ENCODE measurements at regions of chr2 and their contacts with region 1.

Region 1: GRCh38 chr2:144320491-144320890 is 199.4 kb downstream of the ZEB2 start:
- DNase-seq: peak in 5 of 9 donors; percentile 16 to 22 (median 18)
- ATAC-seq: peak; percentile 84
- H3K4me3 ChIP-seq: no peak overlapping the region
- H3K4me3 Mint-ChIP-seq: peak overlapping the region in 4 of 10 donors; percentile 5 to 29 (median 18)
- H3K27ac ChIP-seq: no peak overlapping the region
- H3K27ac Mint-ChIP-seq: peak overlapping the region in 4 of 9 donors; percentile 4 to 66 (median 31)
- H3K4me1 ChIP-seq: peaks cover 0 to 32% of the 10 kb centered on the region in 2 donors
- H3K4me1 Mint-ChIP-seq: peaks cover 9 to 42% (median 16%) of the 10 kb centered on the region in 7 donors
- H3K27me3 ChIP-seq: no peaks in the 10 kb centered on the region
- H3K27me3 Mint-ChIP-seq: no peaks in the 10 kb centered on the region

Region 2: DNA sequence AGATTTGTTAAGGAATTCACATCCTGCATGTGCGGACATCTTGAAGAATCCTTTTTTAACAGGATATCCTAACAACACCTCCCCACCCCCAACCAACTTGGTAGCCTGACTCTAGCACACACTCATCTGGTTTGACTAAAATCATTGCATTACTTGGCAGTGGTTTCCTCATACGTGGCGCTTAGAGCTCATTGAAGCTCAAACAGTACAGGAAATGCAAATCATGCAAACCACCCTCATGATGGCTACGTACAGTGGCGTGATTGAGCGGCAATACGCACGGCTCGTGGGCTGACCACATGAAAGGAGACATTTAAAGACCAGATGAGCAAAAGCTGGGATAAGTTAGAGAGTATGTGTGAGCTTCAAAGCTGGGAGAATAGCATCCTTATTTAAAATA is 136.8 kb before region 1 on chr2:
- CTCF ChIA-PET with region 1: no interaction called
- POLR2A ChIA-PET with region 1: no interaction called
- intact Hi-C with region 1: loop called in 1 of 2 experiments (anchors 2 kb)
- DNase-seq: peak; percentile 12 to 78 (median 71)
- ATAC-seq: peak; percentile 98
- H3K4me3 ChIP-seq: no peak overlapping the region
- H3K4me3 Mint-ChIP-seq: peak overlapping the region; percentile 37 to 87 (median 79)
- H3K27ac ChIP-seq: no peak overlapping the region
- H3K27ac Mint-ChIP-seq: peak overlapping the region in 8 of 9 donors; percentile 8 to 89 (median 60)
- H3K4me1 ChIP-seq: peaks cover 9 to 30% of the 10 kb centered on the region in 2 donors
- H3K4me1 Mint-ChIP-seq: peaks cover 9 to 26% (median 13%) of the 10 kb centered on the region in 7 donors
- H3K27me3 ChIP-seq: no peaks in the 10 kb centered on the region
- H3K27me3 Mint-ChIP-seq: no peaks in the 10 kb centered on the region

Region 3: GRCh38 chr2:144332356-144333142 is 12.1 kb after region 1 on chr2:
- CTCF ChIA-PET with region 1: no interaction called
- POLR2A ChIA-PET with region 1: interaction called, 3 read pairs
- intact Hi-C with region 1: loop called in 1 of 2 experiments (anchors 1 kb)
- DNase-seq: peak; percentile 65 to 97 (median 85)
- ATAC-seq: peak; percentile 95
- H3K4me3 ChIP-seq: peak overlapping the region; percentile 75
- H3K4me3 Mint-ChIP-seq: peak overlapping the region; percentile 91 to 96 (median 93)
- H3K27ac ChIP-seq: peak overlapping the region; percentile 64
- H3K27ac Mint-ChIP-seq: peak overlapping the region; percentile 54 to 91 (median 87)
- H3K4me1 ChIP-seq: peaks cover 5 to 26% of the 10 kb centered on the region in 2 donors
- H3K4me1 Mint-ChIP-seq: peaks cover 7 to 31% (median 13%) of the 10 kb centered on the region in 7 donors
- H3K27me3 ChIP-seq: no peaks in the 10 kb centered on the region
- H3K27me3 Mint-ChIP-seq: peaks cover 0 to 6% (median 0%) of the 10 kb centered on the region in 5 donors

Region 4: DNA sequence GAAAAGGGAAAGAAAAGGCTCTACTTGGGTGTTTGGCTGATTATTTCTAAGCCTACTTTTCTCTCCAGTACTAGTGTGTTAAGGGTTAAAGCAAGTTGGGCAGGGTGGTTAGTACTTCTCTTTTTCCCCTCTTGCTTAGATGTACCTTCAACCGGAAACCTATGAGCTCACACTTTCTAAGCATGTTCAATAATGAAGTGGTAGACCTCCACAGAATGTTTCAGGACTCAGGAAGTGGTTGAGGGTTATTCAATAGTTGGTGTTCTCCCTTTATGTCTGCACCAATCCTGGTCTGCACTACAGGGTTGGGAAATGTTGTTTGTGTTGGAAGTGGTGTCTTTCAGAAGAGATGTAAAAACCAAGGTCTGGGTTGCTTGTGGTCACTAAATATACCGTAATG is 62.4 kb after region 1 on chr2:
- CTCF ChIA-PET with region 1: no interaction called
- POLR2A ChIA-PET with region 1: no interaction called
- intact Hi-C with region 1: loop called in 1 of 2 experiments (anchors 2 kb)
- DNase-seq: peak in 7 of 9 donors; percentile 31 to 68 (median 53)
- ATAC-seq: peak; percentile 90
- H3K4me3 ChIP-seq: no peak overlapping the region
- H3K4me3 Mint-ChIP-seq: peak overlapping the region in 8 of 10 donors; percentile 10 to 68 (median 46)
- H3K27ac ChIP-seq: no peak overlapping the region
- H3K27ac Mint-ChIP-seq: peak overlapping the region in 3 of 9 donors; percentile 15 to 54 (median 43)
- H3K4me1 ChIP-seq: peaks cover 8 to 24% of the 10 kb centered on the region in 2 donors
- H3K4me1 Mint-ChIP-seq: peaks cover 11 to 43% (median 25%) of the 10 kb centered on the region in 7 donors
- H3K27me3 ChIP-seq: no peaks in the 10 kb centered on the region
- H3K27me3 Mint-ChIP-seq: peaks cover 6 to 20% (median 13%) of the 10 kb centered on the region in 5 donors

Region 5: DNA sequence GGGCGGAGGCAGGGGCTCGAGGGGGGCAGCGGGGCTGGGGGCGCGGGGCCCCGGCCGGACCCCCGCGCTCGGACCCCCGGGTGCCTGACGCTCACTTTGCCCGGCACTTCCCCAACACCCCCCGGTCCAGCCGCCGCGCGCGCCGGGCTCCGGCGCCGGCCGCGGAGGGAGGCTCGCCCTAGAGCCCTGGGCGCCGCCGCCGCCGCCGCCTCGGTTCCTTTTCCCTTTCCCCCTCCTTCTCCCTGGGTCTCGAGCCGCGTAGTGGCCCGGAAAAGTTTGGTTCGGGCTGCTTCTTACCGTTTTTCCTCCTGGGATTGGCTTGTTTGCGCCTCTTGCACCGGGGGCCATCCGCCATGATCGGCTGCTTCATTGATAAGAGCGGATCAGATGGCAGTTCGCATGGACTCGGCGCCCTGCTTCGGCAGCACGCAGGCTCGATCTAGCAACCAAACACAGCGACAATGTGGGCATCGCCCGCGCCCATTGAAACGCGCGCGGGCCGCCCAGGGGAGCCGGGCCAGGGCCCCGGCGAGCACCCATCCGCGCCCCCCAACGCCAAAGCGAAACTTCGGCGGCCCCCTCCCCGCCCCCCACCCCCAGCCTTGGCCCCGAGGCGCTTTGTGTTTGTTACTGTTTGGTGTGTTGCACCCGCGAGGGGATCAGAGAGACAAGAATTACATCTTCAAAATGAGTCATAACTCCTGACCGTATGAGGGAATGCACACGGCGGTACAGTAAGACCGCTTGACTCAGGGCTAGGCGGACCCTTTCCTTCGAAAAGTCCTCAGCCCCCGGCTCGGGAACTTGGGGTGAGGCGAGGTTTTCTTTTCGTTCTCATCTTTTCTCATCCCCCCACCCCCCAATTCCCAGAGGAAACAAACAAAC is 196.7 kb after region 1 on chr2:
- CTCF ChIA-PET with region 1: no interaction called
- POLR2A ChIA-PET with region 1: no interaction called
- intact Hi-C with region 1: loop called in 1 of 2 experiments (anchors 1 kb)
- DNase-seq: peak in 6 of 9 donors; percentile 14 to 62 (median 32)
- ATAC-seq: peak; percentile 62
- H3K4me3 ChIP-seq: peak overlapping the region; percentile 49
- H3K4me3 Mint-ChIP-seq: no peak overlapping the region
- H3K27ac ChIP-seq: peak overlapping the region; percentile 37
- H3K27ac Mint-ChIP-seq: peak overlapping the region in 3 of 9 donors; percentile 46 to 85 (median 52)
- H3K4me1 ChIP-seq: peaks cover 21 to 22% of the 10 kb centered on the region in 2 donors
- H3K4me1 Mint-ChIP-seq: peaks cover 5 to 22% (median 18%) of the 10 kb centered on the region in 7 donors
- H3K27me3 ChIP-seq: peaks cover 0 to 33% of the 10 kb centered on the region in 2 donors
- H3K27me3 Mint-ChIP-seq: peaks cover 38 to 60% (median 52%) of the 10 kb centered on the region in 5 donors

Region 6: GRCh38 chr2:144671695-144672455 is 351.4 kb after region 1 on chr2:
- CTCF ChIA-PET with region 1: no interaction called
- POLR2A ChIA-PET with region 1: no interaction called
- intact Hi-C with region 1: no loop called
- DNase-seq: no peak
- ATAC-seq: peak; percentile 82
- H3K4me3 ChIP-seq: no peak overlapping the region
- H3K4me3 Mint-ChIP-seq: no peak overlapping the region
- H3K27ac ChIP-seq: no peak overlapping the region
- H3K27ac Mint-ChIP-seq: no peak overlapping the region
- H3K4me1 ChIP-seq: no peaks in the 10 kb centered on the region
- H3K4me1 Mint-ChIP-seq: no peaks in the 10 kb centered on the region
- H3K27me3 ChIP-seq: no peaks in the 10 kb centered on the region
- H3K27me3 Mint-ChIP-seq: peaks cover 0 to 6% (median 3%) of the 10 kb centered on the region in 5 donors

Region 7: DNA sequence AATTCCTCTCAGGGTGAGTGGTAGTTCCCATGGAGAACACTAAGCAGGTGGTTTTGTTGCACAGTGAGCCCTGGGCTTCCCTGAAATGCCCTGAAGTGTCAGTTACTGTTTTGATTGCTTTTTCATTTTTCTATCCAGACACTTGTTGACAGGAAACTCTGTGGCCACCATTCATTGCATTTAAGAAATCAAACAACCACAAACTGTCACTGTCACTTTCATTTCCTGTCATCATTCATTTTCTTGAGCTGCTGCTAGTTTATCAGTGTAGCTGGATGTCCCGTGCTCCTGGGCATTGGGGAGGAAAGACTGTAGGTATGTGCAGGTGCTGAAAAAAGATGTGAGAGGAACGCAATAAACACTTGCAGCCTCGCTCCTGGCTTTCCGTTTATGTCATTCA is 1091.0 kb after region 1 on chr2:
- CTCF ChIA-PET with region 1: no interaction called
- POLR2A ChIA-PET with region 1: no interaction called
- intact Hi-C with region 1: loop called in 1 of 2 experiments (anchors 10 kb)
- DNase-seq: peak in 6 of 9 donors; percentile 1 to 40 (median 8)
- ATAC-seq: peak; percentile 72
- H3K4me3 ChIP-seq: no peak overlapping the region
- H3K4me3 Mint-ChIP-seq: peak overlapping the region in 1 of 10 donors; percentile 58
- H3K27ac ChIP-seq: no peak overlapping the region
- H3K27ac Mint-ChIP-seq: peak overlapping the region in 2 of 9 donors; percentile 50 to 70
- H3K4me1 ChIP-seq: peaks cover 0 to 5% of the 10 kb centered on the region in 2 donors
- H3K4me1 Mint-ChIP-seq: peaks cover 0 to 27% (median 12%) of the 10 kb centered on the region in 7 donors
- H3K27me3 ChIP-seq: no peaks in the 10 kb centered on the region
- H3K27me3 Mint-ChIP-seq: peaks cover 0 to 59% (median 7%) of the 10 kb centered on the region in 5 donors